GM12878 (cell line): ENCODE measurements at regions of chr3 and their contacts with region 1.

Region 1: GRCh38 chr3:11288786-11289682 is 16.8 kb downstream of the ATG7 start:
- DNase-seq: peak; percentile 71
- ATAC-seq: peak; percentile 85
- H3K4me3 ChIP-seq: peak overlapping the region; percentile 30; the same call in 1 of the 2 replicates
- H3K27ac ChIP-seq: peak overlapping the region; percentile 91
- H3K4me1 ChIP-seq: peaks cover 36% of the 10 kb centered on the region
- H3K27me3 ChIP-seq: no peaks in the 10 kb centered on the region
- CTCF ChIP-seq: 0 out of 6 replicates have a peak, but pooled peaks of 1 of the 3 experiments have one; percentile 3
- EP300 ChIP-seq: peak; percentile 50 to 57; a peak in 2 of 4 replicates
- POLR2A ChIP-seq: no peak
- RAD21 ChIP-seq: no peak

Region 2: DNA sequence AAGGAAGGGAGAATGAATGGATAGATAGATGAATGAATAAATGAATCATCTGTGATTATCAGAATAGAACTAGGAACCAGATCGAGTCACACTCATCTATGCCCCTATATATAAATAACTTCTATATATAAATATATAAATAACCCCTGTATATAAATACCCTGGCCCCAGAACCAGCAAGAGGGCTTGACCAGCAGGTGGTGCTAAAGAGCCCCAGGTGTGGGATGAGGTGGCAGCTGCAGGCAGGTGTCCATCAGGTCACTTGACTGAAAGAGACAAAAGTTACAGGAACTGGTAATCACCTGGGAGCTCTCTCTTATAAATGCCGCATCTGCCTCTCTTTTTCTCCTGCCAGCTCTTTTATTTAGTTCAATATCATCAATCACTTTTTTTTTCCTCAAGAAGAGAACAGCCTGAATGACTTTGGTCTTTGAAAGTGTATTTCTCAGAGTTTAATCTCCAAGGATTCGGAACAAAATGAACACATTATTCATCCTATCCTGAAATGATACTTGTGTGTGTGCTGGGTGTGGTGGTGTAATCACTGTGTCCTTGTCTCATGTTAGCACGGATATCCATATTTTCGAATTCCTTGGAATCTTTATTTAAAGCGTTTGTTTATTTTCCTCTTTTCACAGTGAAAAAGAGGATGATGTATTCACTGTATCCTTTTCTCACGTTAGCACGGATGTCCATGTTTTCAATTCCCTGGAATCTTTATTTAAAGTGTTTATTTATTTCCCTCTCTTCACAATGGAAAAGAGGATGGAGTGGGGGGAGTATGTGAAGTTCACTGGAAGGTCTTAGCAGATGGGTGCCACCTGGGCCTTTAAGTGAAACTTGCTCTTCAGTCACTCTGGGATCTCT is 52.2 kb before region 1 on chr3:
- CTCF ChIA-PET with region 1: interaction called, 12 read pairs
- POLR2A ChIA-PET with region 1: no interaction called
- RAD21 ChIA-PET with region 1: interaction called, 4 read pairs
- SMC1A ChIA-PET with region 1: interaction called, 5 read pairs
- in situ Hi-C with region 1: no loop called
- intact Hi-C with region 1: loop called (anchors 5 kb)
- DNase-seq: no peak
- ATAC-seq: peak; percentile 96
- H3K4me3 ChIP-seq: no peak overlapping the region
- H3K27ac ChIP-seq: no peak overlapping the region
- H3K4me1 ChIP-seq: no peaks in the 10 kb centered on the region
- H3K27me3 ChIP-seq: no peaks in the 10 kb centered on the region
- CTCF ChIP-seq: peak; percentile 60 to 85 (median 70)
- EP300 ChIP-seq: no peak
- POLR2A ChIP-seq: no peak
- RAD21 ChIP-seq: peak; percentile 87

Region 3: GRCh38 chr3:11244126-11244677 is 44.8 kb before region 1 on chr3:
- CTCF ChIA-PET with region 1: interaction called, 4 read pairs
- POLR2A ChIA-PET with region 1: no interaction called
- RAD21 ChIA-PET with region 1: no interaction called
- SMC1A ChIA-PET with region 1: interaction called, 10 read pairs
- in situ Hi-C with region 1: no loop called
- intact Hi-C with region 1: loop called (anchors 5 kb)
- DNase-seq: no peak
- ATAC-seq: no peak
- H3K4me3 ChIP-seq: no peak overlapping the region
- H3K27ac ChIP-seq: no peak overlapping the region
- H3K4me1 ChIP-seq: no peaks in the 10 kb centered on the region
- H3K27me3 ChIP-seq: no peaks in the 10 kb centered on the region
- CTCF ChIP-seq: no peak
- EP300 ChIP-seq: no peak
- POLR2A ChIP-seq: no peak
- RAD21 ChIP-seq: no peak

Region 4: GRCh38 chr3:11271986-11272904 is 16.8 kb before region 1 on chr3 and contains the start of gene ATG7:
- CTCF ChIA-PET with region 1: interaction called, 32 read pairs
- POLR2A ChIA-PET with region 1: interaction called, 16 read pairs
- RAD21 ChIA-PET with region 1: interaction called, 38 read pairs
- SMC1A ChIA-PET with region 1: interaction called, 73 read pairs
- in situ Hi-C with region 1: no loop called
- intact Hi-C with region 1: no loop called
- DNase-seq: peak; percentile 82
- ATAC-seq: peak; percentile 99
- H3K4me3 ChIP-seq: peak within 1 kb of the TSS; percentile 99
- H3K27ac ChIP-seq: peak within 1 kb of the TSS; percentile 88
- H3K4me1 ChIP-seq: peaks cover 7% of the 10 kb centered on the region
- H3K27me3 ChIP-seq: no peaks in the 10 kb centered on the region
- CTCF ChIP-seq: no peak
- EP300 ChIP-seq: no peak
- POLR2A ChIP-seq: peak; percentile 95
- RAD21 ChIP-seq: no peak
- polyA plus RNA-seq, gene ATG7: 13.5 to 18.0 TPM

Region 5: DNA sequence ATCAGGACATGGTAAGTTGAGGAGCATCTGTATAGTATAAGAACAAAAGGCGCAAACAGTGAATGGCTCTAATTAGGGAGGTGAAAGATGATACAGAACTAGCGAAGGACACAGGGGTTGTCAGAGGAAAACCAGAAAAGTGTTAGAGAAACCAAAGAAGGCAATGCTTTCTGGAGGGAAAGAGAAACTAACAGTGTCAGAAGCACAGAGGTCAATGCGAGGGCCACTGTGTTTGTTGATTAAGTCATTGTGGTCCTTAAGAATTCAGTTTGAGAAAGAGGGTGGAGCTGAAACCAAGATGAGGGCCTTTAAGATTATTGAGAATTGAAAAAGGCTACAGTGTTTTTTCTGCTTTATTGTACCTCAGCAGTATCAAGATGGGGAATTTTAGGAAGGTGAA is 11.9 kb after region 1 on chr3:
- CTCF ChIA-PET with region 1: interaction called, 5 read pairs
- POLR2A ChIA-PET with region 1: interaction called, 12 read pairs
- RAD21 ChIA-PET with region 1: interaction called, 14 read pairs
- SMC1A ChIA-PET with region 1: interaction called, 58 read pairs
- in situ Hi-C with region 1: no loop called
- intact Hi-C with region 1: loop called (anchors 1 kb)
- DNase-seq: peak; percentile 46
- ATAC-seq: peak; percentile 98
- H3K4me3 ChIP-seq: no peak overlapping the region
- H3K27ac ChIP-seq: peak overlapping the region; percentile 60
- H3K4me1 ChIP-seq: peaks cover 3% of the 10 kb centered on the region; the same call in 1 of the 2 replicates
- H3K27me3 ChIP-seq: no peaks in the 10 kb centered on the region
- CTCF ChIP-seq: no peak
- EP300 ChIP-seq: no peak
- POLR2A ChIP-seq: no peak
- RAD21 ChIP-seq: no peak

Region 6: GRCh38 chr3:11306817-11307589 is 18.0 kb after region 1 on chr3:
- CTCF ChIA-PET with region 1: interaction called, 3 read pairs
- POLR2A ChIA-PET with region 1: interaction called, 12 read pairs
- RAD21 ChIA-PET with region 1: interaction called, 12 read pairs
- SMC1A ChIA-PET with region 1: interaction called, 58 read pairs
- in situ Hi-C with region 1: no loop called
- intact Hi-C with region 1: no loop called
- DNase-seq: no peak
- ATAC-seq: peak; percentile 71
- H3K4me3 ChIP-seq: no peak overlapping the region
- H3K27ac ChIP-seq: no peak overlapping the region
- H3K4me1 ChIP-seq: peaks cover 3% of the 10 kb centered on the region; the same call in 1 of the 2 replicates
- H3K27me3 ChIP-seq: no peaks in the 10 kb centered on the region
- CTCF ChIP-seq: no peak
- EP300 ChIP-seq: no peak
- POLR2A ChIP-seq: no peak
- RAD21 ChIP-seq: no peak